Caco-2 (cell line): ENCODE measurements at regions of chr16 and their contacts with region 1.

Region 1: DNA sequence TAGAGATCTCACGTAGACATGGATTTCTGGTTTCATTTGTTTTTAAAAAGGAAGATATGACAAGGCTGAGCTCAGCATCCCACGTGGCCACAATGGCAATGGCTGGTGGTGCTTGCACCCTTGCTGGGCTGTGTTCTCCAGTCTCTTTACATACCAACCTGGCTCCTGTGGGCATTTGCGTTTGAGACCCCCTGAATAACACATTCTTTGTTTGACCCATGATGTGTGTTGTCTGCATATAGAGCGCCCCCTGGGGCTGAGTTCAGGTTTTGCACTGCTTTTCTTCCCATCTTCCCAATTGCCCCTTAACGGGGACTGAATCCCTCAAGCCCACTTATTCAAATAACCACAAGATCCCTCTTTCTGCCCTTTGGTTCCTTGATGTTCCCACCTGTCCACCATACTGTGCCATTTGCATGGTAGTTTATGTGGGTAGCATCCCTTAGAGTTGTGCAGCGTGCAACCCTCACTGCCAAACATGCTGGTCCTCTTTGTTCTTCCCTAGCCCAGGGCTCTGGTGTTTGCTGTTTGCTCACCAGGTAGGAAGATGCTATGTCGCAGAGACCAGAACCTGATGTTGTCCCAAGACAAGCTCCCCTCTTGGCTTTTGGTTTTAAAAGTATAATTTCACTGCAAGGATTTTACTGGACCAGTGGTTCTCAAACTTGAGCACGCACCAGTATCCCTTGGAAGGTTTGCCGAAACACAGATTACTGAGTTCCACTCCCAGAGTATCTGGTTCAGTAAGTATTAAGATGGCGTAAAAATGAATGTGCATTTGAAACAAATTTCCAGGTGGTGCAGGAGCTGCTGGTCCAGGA is 38.5 kb upstream of the NKD1 start:
- DNase-seq: peak in 1 of 2 experiments; percentile 40
- H3K4me3 ChIP-seq: no peak overlapping the region
- H3K4me3 Mint-ChIP-seq: no peak overlapping the region
- H3K27ac Mint-ChIP-seq: peak overlapping the region; percentile 13
- H3K4me1 ChIP-seq: peaks cover 23% of the 10 kb centered on the region
- H3K4me1 Mint-ChIP-seq: peaks cover 19% of the 10 kb centered on the region
- H3K27me3 ChIP-seq: no peaks in the 10 kb centered on the region
- H3K27me3 Mint-ChIP-seq: no peaks in the 10 kb centered on the region
- CTCF ChIP-seq: peak; percentile 54 to 89

Region 2: GRCh38 chr16:50373780-50374179 is 136.0 kb before region 1 on chr16:
- CTCF ChIA-PET with region 1: interaction called, 3 read pairs
- POLR2A ChIA-PET with region 1: no interaction called
- intact Hi-C with region 1: loop called (anchors 1 kb)
- DNase-seq: no peak
- H3K4me3 ChIP-seq: no peak overlapping the region
- H3K4me3 Mint-ChIP-seq: no peak overlapping the region
- H3K27ac Mint-ChIP-seq: no peak overlapping the region
- H3K4me1 ChIP-seq: peaks cover 10% of the 10 kb centered on the region; the same call in 1 of the 2 replicates
- H3K4me1 Mint-ChIP-seq: peaks cover 18% of the 10 kb centered on the region
- H3K27me3 ChIP-seq: no peaks in the 10 kb centered on the region
- H3K27me3 Mint-ChIP-seq: no peaks in the 10 kb centered on the region
- CTCF ChIP-seq: no peak

Region 3: GRCh38 chr16:50457423-50457822 is 52.3 kb before region 1 on chr16:
- CTCF ChIA-PET with region 1: no interaction called
- POLR2A ChIA-PET with region 1: no interaction called
- intact Hi-C with region 1: no loop called
- DNase-seq: no peak
- H3K4me3 ChIP-seq: no peak overlapping the region
- H3K4me3 Mint-ChIP-seq: no peak overlapping the region
- H3K27ac Mint-ChIP-seq: no peak overlapping the region
- H3K4me1 ChIP-seq: peaks cover 20% of the 10 kb centered on the region
- H3K4me1 Mint-ChIP-seq: peaks cover 7% of the 10 kb centered on the region
- H3K27me3 ChIP-seq: no peaks in the 10 kb centered on the region
- H3K27me3 Mint-ChIP-seq: no peaks in the 10 kb centered on the region
- CTCF ChIP-seq: no peak

Region 4: GRCh38 chr16:50467943-50468760 is 41.6 kb before region 1 on chr16:
- CTCF ChIA-PET with region 1: no interaction called
- POLR2A ChIA-PET with region 1: no interaction called
- intact Hi-C with region 1: loop called (anchors 1 kb)
- DNase-seq: peak; percentile 93 to 95
- H3K4me3 ChIP-seq: peak overlapping the region; percentile 43
- H3K4me3 Mint-ChIP-seq: peak overlapping the region; percentile 74
- H3K27ac Mint-ChIP-seq: peak overlapping the region; percentile 93
- H3K4me1 ChIP-seq: peaks cover 66% of the 10 kb centered on the region
- H3K4me1 Mint-ChIP-seq: peaks cover 35% of the 10 kb centered on the region
- H3K27me3 ChIP-seq: no peaks in the 10 kb centered on the region
- H3K27me3 Mint-ChIP-seq: no peaks in the 10 kb centered on the region
- CTCF ChIP-seq: no peak

Region 5: GRCh38 chr16:50520451-50521245 is 10.9 kb after region 1 on chr16:
- CTCF ChIA-PET with region 1: interaction called, 3 read pairs
- POLR2A ChIA-PET with region 1: no interaction called
- intact Hi-C with region 1: loop called (anchors 2 kb)
- DNase-seq: peak; percentile 68 to 81
- H3K4me3 ChIP-seq: no peak overlapping the region
- H3K4me3 Mint-ChIP-seq: peak overlapping the region; percentile 3
- H3K27ac Mint-ChIP-seq: peak overlapping the region; percentile 0
- H3K4me1 ChIP-seq: peaks cover 30% of the 10 kb centered on the region
- H3K4me1 Mint-ChIP-seq: peaks cover 10% of the 10 kb centered on the region
- H3K27me3 ChIP-seq: no peaks in the 10 kb centered on the region
- H3K27me3 Mint-ChIP-seq: no peaks in the 10 kb centered on the region
- CTCF ChIP-seq: no peak